PC-3 (cell line): ENCODE measurements at regions of chr7 and their contacts with region 1.

Region 1: GRCh38 chr7:7176421-7177043 is 5.8 kb upstream of the C1GALT1 start:
- DNase-seq: peak; percentile 84
- ATAC-seq: peak; percentile 68
- H3K4me3 ChIP-seq: peak overlapping the region; percentile 52
- H3K27ac ChIP-seq: peak overlapping the region; percentile 91
- H3K4me1 ChIP-seq: peaks cover 40% of the 10 kb centered on the region
- H3K27me3 ChIP-seq: no peaks in the 10 kb centered on the region
- CTCF ChIP-seq: no peak

Region 2: GRCh38 chr7:6706677-6707544 is 469.6 kb before region 1 on chr7 and contains the start of gene ZNF12:
- CTCF ChIA-PET with region 1: no interaction called
- POLR2A ChIA-PET with region 1: no interaction called
- intact Hi-C with region 1: no loop called
- DNase-seq: peak; percentile 93
- ATAC-seq: peak; percentile 96
- H3K4me3 ChIP-seq: peak within 1 kb of the TSS; percentile 99
- H3K27ac ChIP-seq: peak within 1 kb of the TSS; percentile 32; the same call in 1 of the 2 replicates
- H3K4me1 ChIP-seq: 0 out of 2 replicates have a peak, but pooled peaks cover 3% of the 10 kb centered on the region
- H3K27me3 ChIP-seq: no peaks in the 10 kb centered on the region
- CTCF ChIP-seq: no peak
- total RNA-seq, gene ZNF12: 12.5 and 27.6 TPM in 2 replicates

Region 3: GRCh38 chr7:7014827-7015610 is 161.5 kb before region 1 on chr7:
- CTCF ChIA-PET with region 1: no interaction called
- POLR2A ChIA-PET with region 1: interaction called, 12 read pairs
- intact Hi-C with region 1: loop called (anchors 2 kb)
- DNase-seq: peak; percentile 92
- ATAC-seq: peak; percentile 52
- H3K4me3 ChIP-seq: peak overlapping the region; percentile 52; the same call in 1 of the 2 replicates
- H3K27ac ChIP-seq: peak overlapping the region; percentile 82
- H3K4me1 ChIP-seq: peaks cover 57% of the 10 kb centered on the region
- H3K27me3 ChIP-seq: no peaks in the 10 kb centered on the region
- CTCF ChIP-seq: no peak

Region 4: DNA sequence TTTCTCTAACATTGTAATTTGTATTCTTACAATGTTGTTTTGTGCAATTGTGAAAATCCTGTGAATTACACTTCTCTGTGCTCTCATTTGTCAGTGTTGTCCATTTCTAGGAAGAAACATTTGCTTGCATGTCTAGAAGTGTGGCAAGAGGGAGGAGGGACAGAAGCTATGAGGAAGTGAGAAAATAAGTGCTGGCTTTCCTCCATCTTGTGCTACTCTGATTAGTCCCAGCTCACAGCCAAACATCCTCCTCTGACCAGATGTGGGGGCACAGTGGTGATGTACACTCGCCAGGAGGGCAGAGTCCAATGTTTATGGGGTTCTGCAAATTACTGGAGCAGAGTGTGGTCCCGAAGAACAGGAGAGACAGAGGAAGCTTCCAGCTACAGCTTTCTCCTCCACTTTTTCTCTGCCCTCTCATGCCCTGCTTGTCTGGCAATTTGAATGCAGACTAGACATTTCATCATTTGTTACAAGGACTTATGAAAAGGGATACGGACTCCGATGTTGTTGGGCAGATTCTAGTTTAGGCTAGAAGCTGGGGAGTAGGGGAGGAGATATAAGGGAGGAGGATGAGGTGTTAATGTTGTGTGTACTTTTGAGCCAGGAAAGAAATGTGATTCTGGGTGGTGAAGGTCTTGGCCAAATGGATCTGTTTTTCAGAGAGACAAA is 125.2 kb before region 1 on chr7:
- CTCF ChIA-PET with region 1: no interaction called
- POLR2A ChIA-PET with region 1: no interaction called
- intact Hi-C with region 1: no loop called
- DNase-seq: no peak
- ATAC-seq: no peak
- H3K4me3 ChIP-seq: no peak overlapping the region
- H3K27ac ChIP-seq: no peak overlapping the region
- H3K4me1 ChIP-seq: no peaks in the 10 kb centered on the region
- H3K27me3 ChIP-seq: no peaks in the 10 kb centered on the region
- CTCF ChIP-seq: no peak

Region 5: DNA sequence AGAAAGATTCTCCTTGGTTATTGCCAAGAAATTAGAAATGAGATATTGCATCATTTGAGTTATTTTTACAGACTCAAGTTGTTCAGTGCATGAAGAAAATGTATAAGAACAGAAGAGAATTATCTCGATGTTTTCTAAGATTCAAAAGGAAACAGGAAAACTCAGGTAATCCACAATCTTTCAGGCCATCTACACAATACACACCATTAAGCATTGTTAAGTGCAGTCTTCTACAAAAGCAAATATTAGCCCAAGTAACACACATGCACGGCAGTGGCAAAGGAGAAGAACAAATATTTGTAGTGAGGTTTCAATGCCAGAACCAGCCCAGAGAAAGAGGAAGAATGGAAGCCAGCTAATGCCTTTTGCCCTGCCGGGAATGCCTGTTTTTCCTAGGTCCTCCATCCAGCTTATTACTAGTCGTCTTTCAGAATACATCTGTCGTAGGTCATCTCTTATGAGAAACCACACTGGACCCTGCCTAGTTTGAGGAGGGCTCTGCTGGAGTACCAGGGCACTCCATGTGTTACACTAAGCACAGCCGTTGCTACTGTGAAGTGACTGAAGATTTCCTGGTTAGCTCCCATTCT is 61.7 kb before region 1 on chr7:
- CTCF ChIA-PET with region 1: no interaction called
- POLR2A ChIA-PET with region 1: interaction called, 4 read pairs
- intact Hi-C with region 1: loop called (anchors 2 kb)
- DNase-seq: peak; percentile 73
- ATAC-seq: peak; percentile 98
- H3K4me3 ChIP-seq: no peak overlapping the region
- H3K27ac ChIP-seq: peak overlapping the region; percentile 33
- H3K4me1 ChIP-seq: peaks cover 14% of the 10 kb centered on the region
- H3K27me3 ChIP-seq: no peaks in the 10 kb centered on the region
- CTCF ChIP-seq: no peak

Region 6: GRCh38 chr7:7122701-7123281 is 53.7 kb before region 1 on chr7:
- CTCF ChIA-PET with region 1: no interaction called
- POLR2A ChIA-PET with region 1: no interaction called
- intact Hi-C with region 1: loop called (anchors 1 kb)
- DNase-seq: peak; percentile 46
- ATAC-seq: peak; percentile 70
- H3K4me3 ChIP-seq: no peak overlapping the region
- H3K27ac ChIP-seq: peak overlapping the region; percentile 33
- H3K4me1 ChIP-seq: peaks cover 16% of the 10 kb centered on the region
- H3K27me3 ChIP-seq: no peaks in the 10 kb centered on the region
- CTCF ChIP-seq: no peak

Region 7: GRCh38 chr7:7321720-7322128 is 145.2 kb after region 1 on chr7:
- CTCF ChIA-PET with region 1: no interaction called
- POLR2A ChIA-PET with region 1: interaction called, 10 read pairs
- intact Hi-C with region 1: loop called (anchors 1 kb)
- DNase-seq: peak; percentile 94
- ATAC-seq: peak; percentile 99
- H3K4me3 ChIP-seq: no peak overlapping the region
- H3K27ac ChIP-seq: peak overlapping the region; percentile 71
- H3K4me1 ChIP-seq: peaks cover 24% of the 10 kb centered on the region
- H3K27me3 ChIP-seq: no peaks in the 10 kb centered on the region
- CTCF ChIP-seq: no peak

Region 8: GRCh38 chr7:7512861-7513597 is 336.5 kb after region 1 on chr7:
- CTCF ChIA-PET with region 1: no interaction called
- POLR2A ChIA-PET with region 1: no interaction called
- intact Hi-C with region 1: no loop called
- DNase-seq: no peak
- ATAC-seq: no peak
- H3K4me3 ChIP-seq: no peak overlapping the region
- H3K27ac ChIP-seq: no peak overlapping the region
- H3K4me1 ChIP-seq: no peaks in the 10 kb centered on the region
- H3K27me3 ChIP-seq: no peaks in the 10 kb centered on the region
- CTCF ChIP-seq: no peak